ENCODE measurements at regions of chr14 and their contacts with region 1.

Region 1: DNA sequence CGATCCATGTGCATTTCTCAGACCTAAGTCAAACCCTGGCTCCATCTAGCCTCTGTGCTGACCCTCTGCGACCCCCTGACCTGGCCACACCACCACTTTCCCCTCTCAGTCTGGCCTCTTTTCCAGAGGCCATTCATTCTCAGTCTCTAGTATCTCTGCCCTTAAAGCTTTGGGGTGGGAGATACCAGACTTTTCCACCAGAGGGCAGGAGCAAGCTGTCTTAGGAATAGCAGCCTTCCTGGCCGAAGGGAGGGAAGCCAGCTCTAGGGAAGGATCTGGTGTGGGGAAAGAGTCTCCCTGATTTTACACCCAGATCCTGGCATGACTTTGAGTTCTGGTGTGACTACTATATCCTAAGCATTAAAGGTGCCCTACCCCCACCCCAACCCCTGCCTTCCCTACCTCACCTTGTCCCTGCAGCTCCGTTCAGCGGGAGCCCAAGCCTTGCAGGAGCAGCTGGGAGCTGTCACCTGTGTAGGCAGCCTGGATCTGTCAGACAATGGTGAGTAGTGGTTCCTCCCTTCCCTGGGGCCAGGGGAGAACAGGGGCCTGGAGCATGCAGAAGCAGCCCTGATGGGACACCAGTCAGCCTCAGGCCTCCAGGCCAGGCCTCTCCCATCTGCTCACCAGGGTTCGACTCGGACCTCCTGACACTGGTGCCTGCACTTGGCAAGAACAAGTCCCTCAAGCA is 6.6 kb downstream of the CARMIL3 start:
- DNase-seq: peak; percentile 80 to 93
- H3K4me3 ChIP-seq: no peak overlapping the region
- H3K27ac ChIP-seq: no peak overlapping the region
- H3K4me1 ChIP-seq: no peaks in the 10 kb centered on the region
- H3K27me3 ChIP-seq: peaks cover 0 to 37% of the 10 kb centered on the region in 2 donors
- CTCF ChIP-seq: peak; percentile 92 to 94

Region 2: DNA sequence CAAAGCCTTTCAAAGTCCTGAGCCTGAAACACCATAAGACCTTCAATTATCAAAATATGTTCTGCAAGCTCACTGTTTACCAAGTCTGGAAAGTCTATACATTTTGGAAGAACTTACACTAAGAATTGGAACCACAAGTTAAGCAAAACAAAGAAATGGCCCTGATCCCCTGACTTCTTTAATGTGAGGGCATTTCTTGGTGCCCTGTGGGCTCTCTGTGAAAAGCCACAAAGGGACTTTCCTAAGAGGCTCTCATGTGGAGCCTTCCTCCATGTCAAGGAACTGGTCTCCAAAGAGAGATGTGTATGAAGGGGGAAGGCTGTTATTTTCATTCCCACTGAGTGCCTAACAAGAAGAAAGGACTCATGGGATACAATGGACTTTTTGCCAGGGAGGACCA is 636.8 kb before region 1 on chr14:
- intact Hi-C with region 1: no loop called
- DNase-seq: no peak
- H3K4me3 ChIP-seq: no peak overlapping the region
- H3K27ac ChIP-seq: no peak overlapping the region
- H3K4me1 ChIP-seq: no peaks in the 10 kb centered on the region
- H3K27me3 ChIP-seq: peaks cover 0 to 5% of the 10 kb centered on the region in 2 donors
- CTCF ChIP-seq: no peak

Region 3: DNA sequence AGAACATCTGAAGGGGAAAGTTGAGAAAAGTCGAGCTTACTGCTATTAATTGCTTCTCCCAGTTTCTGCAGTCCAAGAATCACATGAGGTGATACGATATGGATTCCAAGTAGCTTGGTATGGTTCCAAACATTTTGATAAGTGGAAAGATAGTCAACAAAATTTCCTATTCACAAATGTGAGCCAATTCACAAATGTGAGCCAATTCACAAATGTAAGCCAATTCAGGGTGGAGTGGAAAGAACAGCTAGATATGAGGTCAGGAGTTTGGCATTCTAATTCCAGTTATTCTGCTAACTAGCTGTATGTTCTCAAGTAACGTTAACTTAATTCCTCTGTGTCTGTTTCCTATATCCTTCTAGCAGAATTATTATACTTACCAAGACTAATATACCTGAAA is 142.4 kb before region 1 on chr14:
- intact Hi-C with region 1: no loop called
- DNase-seq: no peak
- H3K4me3 ChIP-seq: no peak overlapping the region
- H3K27ac ChIP-seq: peak overlapping the region in 1 of 2 donors; percentile 21
- H3K4me1 ChIP-seq: peaks cover 0 to 18% (median 2%) of the 10 kb centered on the region in 4 donors
- H3K27me3 ChIP-seq: no peaks in the 10 kb centered on the region
- CTCF ChIP-seq: no peak

Region 4: GRCh38 chr14:23929822-23930294 is 128.5 kb before region 1 on chr14:
- intact Hi-C with region 1: no loop called
- DNase-seq: peak; percentile 79 to 80
- H3K4me3 ChIP-seq: no peak overlapping the region
- H3K27ac ChIP-seq: no peak overlapping the region
- H3K4me1 ChIP-seq: peaks cover 0 to 9% (median 4%) of the 10 kb centered on the region in 4 donors
- H3K27me3 ChIP-seq: no peaks in the 10 kb centered on the region
- CTCF ChIP-seq: peak; percentile 72 to 83

Region 5: DNA sequence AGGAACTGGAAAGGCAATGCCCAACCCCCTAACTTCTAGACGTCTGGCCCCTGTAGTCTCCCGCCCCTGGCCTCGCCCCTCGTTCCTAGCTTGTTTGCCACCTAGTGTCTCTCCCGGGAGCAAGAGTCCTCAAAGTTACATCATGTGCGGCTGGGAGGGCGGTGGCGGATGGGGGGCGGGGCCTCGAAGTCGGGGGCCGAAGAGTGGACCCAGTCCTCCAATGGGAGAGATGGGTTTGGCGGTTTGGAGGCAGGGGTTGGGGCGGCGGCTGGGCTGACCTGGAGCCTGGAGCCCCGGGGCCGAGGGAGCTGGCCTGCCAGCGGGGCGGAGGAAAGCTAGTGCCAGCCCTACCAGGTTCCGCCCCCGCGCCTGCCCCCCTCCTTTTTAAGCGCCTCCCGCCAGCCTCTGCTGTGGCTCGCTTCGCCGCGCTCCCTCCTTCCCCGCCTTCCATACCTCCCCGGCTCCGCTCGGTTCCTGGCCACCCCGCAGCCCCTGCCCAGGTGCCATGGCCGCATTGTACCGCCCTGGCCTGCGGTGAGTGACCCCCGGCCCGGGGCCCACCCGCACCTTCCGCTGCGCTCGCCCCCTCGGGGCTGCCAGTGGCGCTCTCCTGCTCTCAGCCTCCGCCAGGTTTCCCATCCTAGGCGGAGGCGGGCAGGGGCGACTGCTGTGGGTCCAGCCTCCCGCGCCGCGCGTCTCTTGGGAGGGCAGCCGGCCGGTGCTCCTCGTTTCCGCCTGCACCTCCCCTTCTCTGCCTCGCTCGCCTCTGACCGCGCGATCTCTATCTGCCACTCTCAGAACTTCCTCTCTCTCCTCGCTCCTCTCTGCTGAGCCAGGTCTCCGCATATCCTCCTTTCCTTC is 35.7 kb after region 1 on chr14 and contains the start of gene PCK2:
- intact Hi-C with region 1: loop called (anchors 5 kb)
- DNase-seq: peak; percentile 96 to 98
- H3K4me3 ChIP-seq: peak within 1 kb of the TSS; percentile 91 to 94
- H3K27ac ChIP-seq: peak within 1 kb of the TSS; percentile 97 to 99
- H3K4me1 ChIP-seq: peaks cover 0 to 23% (median 19%) of the 10 kb centered on the region in 4 donors
- H3K27me3 ChIP-seq: no peaks in the 10 kb centered on the region
- CTCF ChIP-seq: peak in 1 of 2 experiments; percentile 27

Region 6: DNA sequence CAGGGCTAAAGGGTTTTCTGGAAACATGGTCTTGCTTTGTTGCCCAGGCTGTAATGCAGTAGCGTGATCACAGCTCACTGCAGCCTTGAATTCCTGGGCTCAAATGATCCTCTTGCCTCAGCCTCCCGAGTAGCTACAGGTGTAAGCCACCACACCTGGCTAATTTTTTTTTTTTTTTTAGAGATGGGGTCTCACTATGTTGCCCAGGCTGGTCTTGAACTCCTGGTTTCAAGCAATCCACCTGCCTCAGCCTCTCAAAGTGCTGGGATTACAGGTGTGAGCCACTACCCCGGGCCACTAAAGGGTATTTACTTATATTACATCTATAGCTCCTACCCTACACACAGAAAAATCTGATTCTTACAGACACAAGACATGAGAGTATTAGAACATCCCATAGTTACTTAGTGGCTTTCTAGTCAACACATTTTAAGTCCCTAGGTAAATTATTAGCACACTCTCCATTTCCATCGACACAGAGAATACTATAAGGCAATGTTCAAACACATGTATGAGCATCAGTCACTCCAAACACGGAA is 50.0 kb after region 1 on chr14:
- intact Hi-C with region 1: loop called (anchors 5 kb)
- DNase-seq: no peak
- H3K4me3 ChIP-seq: no peak overlapping the region
- H3K27ac ChIP-seq: no peak overlapping the region
- H3K4me1 ChIP-seq: peaks cover 0 to 8% (median 5%) of the 10 kb centered on the region in 4 donors
- H3K27me3 ChIP-seq: no peaks in the 10 kb centered on the region
- CTCF ChIP-seq: no peak

Region 7: DNA sequence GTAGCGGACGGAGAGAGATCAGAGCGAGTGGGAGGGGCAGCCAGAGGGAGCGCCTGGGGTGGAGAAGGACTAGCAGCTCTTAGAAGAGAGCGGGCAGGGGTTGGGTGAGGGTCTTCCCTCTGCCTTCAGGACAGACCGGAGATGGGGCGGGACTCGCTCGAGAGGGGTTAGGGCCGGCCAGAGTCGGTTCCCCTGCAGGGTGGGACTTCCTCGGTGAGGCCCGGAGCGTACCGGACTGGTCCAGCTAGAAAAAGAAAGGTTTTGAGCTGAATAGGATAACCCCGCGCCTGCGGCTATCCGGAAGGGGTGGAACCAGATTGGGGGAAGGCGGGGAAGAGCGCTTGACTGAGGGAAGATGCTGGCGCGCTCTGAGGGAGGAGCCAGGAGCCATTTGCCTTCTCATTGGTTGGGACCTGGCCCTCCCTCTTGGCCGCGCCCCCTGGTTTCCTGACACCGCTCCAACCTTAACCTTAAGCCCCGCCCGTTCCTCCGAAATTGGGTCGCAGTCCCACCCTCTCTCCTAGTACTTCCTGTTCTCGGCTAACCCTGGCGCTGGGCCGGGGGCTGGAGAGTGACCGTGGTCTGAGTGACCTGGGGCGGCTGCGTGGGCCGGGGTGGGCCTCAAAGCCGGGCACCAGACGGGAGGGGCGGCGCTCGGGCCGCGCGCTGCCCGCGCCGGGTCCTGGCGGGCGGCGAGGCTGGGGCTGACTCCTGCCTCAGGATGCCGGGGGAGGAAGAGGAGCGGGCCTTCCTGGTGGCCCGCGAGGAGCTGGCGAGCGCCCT is 88.8 kb after region 1 on chr14 and contains the start of gene RNF31:
- intact Hi-C with region 1: loop called (anchors 5 kb)
- DNase-seq: peak; percentile 99
- H3K4me3 ChIP-seq: peak within 1 kb of the TSS; percentile 79 to 92
- H3K27ac ChIP-seq: peak within 1 kb of the TSS; percentile 86 to 87
- H3K4me1 ChIP-seq: peaks cover 12 to 33% (median 25%) of the 10 kb centered on the region in 4 donors
- H3K27me3 ChIP-seq: no peaks in the 10 kb centered on the region
- CTCF ChIP-seq: no peak